Astrocyte of the cerebellum (primary cell): ENCODE measurements at regions of chr7 and their contacts with region 1.

Region 1: DNA sequence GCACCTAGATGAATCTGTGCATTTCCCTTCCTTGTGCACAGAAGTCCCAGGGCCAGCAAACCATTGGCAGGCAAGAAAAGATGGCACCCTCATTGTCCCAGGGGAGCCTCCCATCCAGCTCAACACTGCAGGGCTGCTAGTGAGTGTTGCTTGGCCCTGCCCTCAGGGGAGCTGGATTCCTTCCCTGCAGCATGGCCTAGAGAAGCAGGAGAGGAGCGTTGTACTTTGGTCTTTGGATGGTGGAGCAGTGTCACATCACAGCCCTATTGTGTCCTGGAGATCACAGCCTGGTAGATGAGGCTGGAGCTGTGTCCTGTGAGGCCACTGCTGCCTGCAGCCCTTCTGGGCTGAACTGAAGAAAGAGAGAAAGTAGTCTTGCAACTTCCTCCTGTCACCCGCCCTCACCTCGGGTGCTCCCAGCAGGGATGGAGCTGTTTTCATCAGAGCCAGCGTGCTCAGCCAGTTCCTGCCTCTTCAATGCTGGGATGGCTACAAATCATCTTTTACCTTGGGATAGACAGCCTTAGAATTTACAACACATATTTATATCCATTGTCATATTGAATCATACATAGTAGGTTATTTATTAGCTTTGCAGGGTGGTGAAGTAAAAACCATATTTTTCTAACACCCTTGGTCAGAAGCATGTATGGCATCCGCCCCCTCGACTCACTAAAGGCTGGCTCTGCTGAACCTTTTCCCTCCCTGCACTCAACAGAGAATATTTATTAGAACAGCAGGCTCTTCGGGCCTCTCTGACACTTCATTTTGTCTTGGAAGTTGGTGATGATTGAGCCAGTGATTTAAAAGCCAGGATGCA is 43.1 kb upstream of the FAM180A start:
- DNase-seq: no peak
- H3K4me3 ChIP-seq: no peak overlapping the region
- CTCF ChIP-seq: no peak

Region 2: DNA sequence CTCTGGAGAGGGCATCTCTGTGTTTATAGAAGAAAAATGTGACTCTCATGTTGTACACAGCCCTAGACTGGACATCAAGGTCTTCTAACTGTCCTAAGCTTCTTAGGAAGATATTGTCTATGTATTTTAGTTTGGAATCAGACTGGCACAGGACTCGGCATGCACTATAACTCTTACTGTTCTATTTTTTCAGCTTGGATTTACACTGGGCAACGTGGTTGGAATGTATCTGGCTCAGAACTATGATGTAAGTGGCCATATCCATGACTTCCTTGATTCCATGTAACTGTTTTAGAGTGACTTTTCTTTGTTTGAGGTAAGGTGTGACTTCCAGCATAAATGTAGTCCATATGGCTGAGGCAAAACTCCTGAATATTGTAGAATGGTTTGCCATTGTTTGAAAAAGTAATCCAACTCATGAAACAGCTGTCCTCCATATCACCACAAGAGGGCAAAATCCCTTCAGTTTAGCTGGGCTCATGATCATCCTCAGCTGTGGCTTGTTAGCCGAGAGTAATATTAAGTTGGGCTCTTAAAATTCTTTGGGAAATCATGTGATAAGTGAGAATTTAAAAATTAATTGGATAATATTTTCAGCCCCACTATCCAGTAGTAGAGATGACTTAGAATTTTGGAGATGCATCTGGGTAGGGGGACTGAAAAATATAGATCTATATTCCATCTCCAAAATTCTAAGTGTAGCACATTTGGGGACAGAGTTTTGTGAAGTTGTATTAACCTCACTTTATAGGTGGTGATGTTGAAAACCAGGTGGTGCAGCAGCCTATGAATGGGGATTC is 119.0 kb before region 1 on chr7:
- in situ Hi-C with region 1: loop called (anchors 5 kb)
- DNase-seq: peak; percentile 78
- H3K4me3 ChIP-seq: no peak overlapping the region
- CTCF ChIP-seq: peak; percentile 83

Region 3: GRCh38 chr7:135723411-135723810 is 68.3 kb before region 1 on chr7:
- in situ Hi-C with region 1: loop called (anchors 5 kb)
- DNase-seq: no peak
- H3K4me3 ChIP-seq: no peak overlapping the region
- CTCF ChIP-seq: no peak

Region 4: DNA sequence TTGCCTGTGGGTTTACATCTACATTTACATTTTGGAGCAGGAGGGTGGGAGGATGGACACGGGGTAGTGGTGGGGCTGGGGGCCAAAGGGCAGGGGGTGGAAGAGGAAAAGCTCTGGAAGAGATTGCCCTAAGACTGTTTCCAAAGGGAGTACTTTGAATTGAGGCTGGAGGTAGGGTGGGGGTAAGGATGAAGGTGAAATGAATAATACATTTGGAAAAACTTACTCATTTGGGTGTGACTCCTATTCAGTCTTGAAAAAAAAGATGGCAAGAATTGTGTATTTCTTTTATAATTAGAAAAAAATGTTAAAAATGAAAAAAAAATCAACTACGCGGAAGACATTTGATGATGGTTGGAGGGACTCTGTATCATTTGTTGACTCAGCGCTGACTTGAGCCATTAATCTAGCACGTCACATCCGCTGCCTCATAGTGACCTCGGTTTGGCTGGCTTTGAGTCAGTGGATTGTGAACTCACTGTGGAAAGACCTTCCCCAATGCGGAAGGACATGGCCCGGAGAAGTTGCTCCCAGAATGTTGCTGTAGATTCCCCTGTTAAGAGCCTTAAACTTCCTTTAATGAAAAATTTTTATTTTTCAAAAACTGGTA is 45.9 kb before region 1 on chr7:
- in situ Hi-C with region 1: no loop called
- DNase-seq: peak; percentile 87
- H3K4me3 ChIP-seq: no peak overlapping the region
- CTCF ChIP-seq: no peak

Region 5: GRCh38 chr7:135757719-135758411 is 33.9 kb before region 1 on chr7:
- in situ Hi-C with region 1: no loop called
- DNase-seq: peak; percentile 80
- H3K4me3 ChIP-seq: no peak overlapping the region
- CTCF ChIP-seq: no peak